ENCODE measurements at regions of chr17 and their contacts with region 1.

Region 1: DNA sequence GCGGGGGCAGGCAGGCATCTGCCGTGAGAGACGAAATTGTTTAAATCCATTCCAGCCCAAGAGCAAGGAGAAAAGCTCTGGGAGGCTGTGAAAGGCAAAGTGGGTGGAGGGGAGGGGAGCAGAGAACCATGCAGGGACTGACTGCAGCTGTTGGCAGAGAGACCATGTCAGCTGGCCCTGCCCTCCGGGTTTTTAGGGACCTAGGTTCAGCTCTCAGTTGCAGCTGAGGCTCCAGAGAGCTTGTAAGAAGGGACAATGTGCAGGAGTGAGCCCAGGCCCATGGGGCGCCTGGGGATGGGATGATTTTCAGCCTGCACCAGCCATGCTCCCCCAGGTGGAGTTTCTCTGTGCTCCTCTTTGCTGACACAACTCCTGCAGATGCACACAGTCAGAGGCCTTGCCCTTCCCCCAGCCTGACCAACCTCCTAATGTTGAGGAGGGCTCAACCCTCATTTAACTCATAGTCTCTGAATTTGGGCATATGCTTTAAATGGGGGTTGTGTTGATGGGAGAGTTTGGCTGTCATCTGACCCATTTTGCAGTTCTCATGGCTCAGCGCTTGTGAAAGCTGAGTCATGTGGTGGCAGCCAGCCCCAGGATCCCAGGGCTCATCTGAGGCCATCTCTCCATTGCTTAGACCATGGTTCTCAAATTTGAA is 70.9 kb downstream of the PLXDC1 start:
- DNase-seq: peak in 1 of 2 donors; percentile 56
- ATAC-seq: peak in 7 of 8 donors; percentile 33 to 66 (median 46)
- H3K4me3 ChIP-seq: no peak overlapping the region
- H3K27ac ChIP-seq: peak overlapping the region in 7 of 10 donors; percentile 15 to 91 (median 72)
- H3K4me1 ChIP-seq: peaks cover 11 to 55% (median 30%) of the 10 kb centered on the region in 9 donors
- H3K27me3 ChIP-seq: no peaks in the 10 kb centered on the region
- CTCF ChIP-seq: no peak

Region 2: GRCh38 chr17:39026980-39027451 is 53.5 kb before region 1 on chr17:
- intact Hi-C with region 1: loop called in 1 of 10 experiments (anchors 5 kb)
- DNase-seq: peak; percentile 73 to 82
- ATAC-seq: peak; percentile 79 to 95 (median 93)
- H3K4me3 ChIP-seq: peak overlapping the region; percentile 35 to 66 (median 51)
- H3K27ac ChIP-seq: peak overlapping the region in 7 of 10 donors; percentile 15 to 74 (median 67)
- H3K4me1 ChIP-seq: peaks cover 0 to 20% (median 6%) of the 10 kb centered on the region in 9 donors
- H3K27me3 ChIP-seq: peaks cover 0 to 20% (median 0%) of the 10 kb centered on the region in 7 donors
- CTCF ChIP-seq: peak in 1 of 9 donors; percentile 13

Region 3: DNA sequence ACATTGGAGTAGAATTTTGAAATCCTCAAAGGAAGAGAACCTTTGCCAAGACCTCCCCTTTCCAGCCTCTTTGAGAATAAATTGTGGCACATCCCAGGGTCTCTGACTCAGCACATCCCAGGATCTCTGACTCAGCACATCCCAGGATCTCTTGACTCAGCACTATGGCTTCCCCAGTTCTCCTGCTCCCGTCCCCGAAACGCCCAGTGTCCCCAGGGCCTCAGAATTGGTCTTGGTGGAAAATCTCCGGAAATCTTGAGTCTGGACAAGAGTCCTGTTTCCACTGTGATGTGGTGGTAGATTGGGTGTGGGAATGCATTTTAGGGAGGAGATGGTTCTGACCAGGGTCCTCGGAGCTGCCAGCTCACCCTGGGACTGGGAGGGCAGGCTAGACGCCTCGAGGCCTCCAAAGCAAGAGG is 51.7 kb after region 1 on chr17:
- intact Hi-C with region 1: loop called in 3 of 10 experiments (anchors 5 to 10 kb)
- DNase-seq: peak; percentile 34 to 44
- ATAC-seq: peak; percentile 56 to 86 (median 77)
- H3K4me3 ChIP-seq: no peak overlapping the region
- H3K27ac ChIP-seq: peak overlapping the region in 7 of 10 donors; percentile 6 to 68 (median 40)
- H3K4me1 ChIP-seq: peaks cover 0 to 26% (median 10%) of the 10 kb centered on the region in 9 donors
- H3K27me3 ChIP-seq: no peaks in the 10 kb centered on the region
- CTCF ChIP-seq: no peak

Region 4: GRCh38 chr17:39139137-39139516 is 58.6 kb after region 1 on chr17:
- intact Hi-C with region 1: loop called in 3 of 10 experiments (anchors 5 to 10 kb)
- DNase-seq: no peak
- ATAC-seq: no peak
- H3K4me3 ChIP-seq: no peak overlapping the region
- H3K27ac ChIP-seq: peak overlapping the region in 4 of 10 donors; percentile 10 to 71 (median 59)
- H3K4me1 ChIP-seq: peaks cover 0 to 55% (median 12%) of the 10 kb centered on the region in 9 donors
- H3K27me3 ChIP-seq: no peaks in the 10 kb centered on the region
- CTCF ChIP-seq: no peak